Colonic mucosa (tissue), 4 donors: ENCODE measurements at regions of chr9 and their contacts with region 1.

Region 1: GRCh38 chr9:113125386-113126035 is 25.3 kb upstream of the SLC31A2 start:
- DNase-seq: no peak
- H3K4me3 ChIP-seq: no peak overlapping the region
- H3K27ac ChIP-seq: no peak overlapping the region
- H3K4me1 ChIP-seq: no peaks in the 10 kb centered on the region
- H3K27me3 ChIP-seq: no peaks in the 10 kb centered on the region
- CTCF ChIP-seq: no peak

Region 2: DNA sequence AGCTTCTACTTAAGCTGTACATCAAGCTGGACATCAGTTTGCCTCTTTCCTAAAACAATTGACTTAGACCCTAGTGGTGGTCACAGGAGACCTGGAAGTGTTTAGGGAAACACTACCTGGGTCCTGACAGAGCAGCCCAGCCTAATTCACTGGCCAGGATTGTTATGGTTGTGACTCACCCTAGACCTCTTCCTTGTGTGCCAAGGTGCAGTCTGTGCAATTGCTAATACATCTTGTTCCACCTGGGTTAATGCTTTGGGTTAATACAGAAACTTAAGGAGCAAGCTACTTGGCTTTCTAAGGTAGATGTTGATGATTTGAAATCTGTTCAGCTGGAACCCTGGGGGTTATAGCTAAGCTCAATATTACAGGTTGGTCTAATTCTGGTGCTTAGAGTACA is 186.1 kb before region 1 on chr9:
- intact Hi-C with region 1: loop called (anchors 10 kb)
- DNase-seq: no peak
- H3K4me3 ChIP-seq: no peak overlapping the region
- H3K27ac ChIP-seq: no peak overlapping the region
- H3K4me1 ChIP-seq: no peaks in the 10 kb centered on the region
- H3K27me3 ChIP-seq: no peaks in the 10 kb centered on the region
- CTCF ChIP-seq: no peak